GM13977 (cell line): ENCODE measurements at regions of chr4 and their contacts with region 1.

Region 1: DNA sequence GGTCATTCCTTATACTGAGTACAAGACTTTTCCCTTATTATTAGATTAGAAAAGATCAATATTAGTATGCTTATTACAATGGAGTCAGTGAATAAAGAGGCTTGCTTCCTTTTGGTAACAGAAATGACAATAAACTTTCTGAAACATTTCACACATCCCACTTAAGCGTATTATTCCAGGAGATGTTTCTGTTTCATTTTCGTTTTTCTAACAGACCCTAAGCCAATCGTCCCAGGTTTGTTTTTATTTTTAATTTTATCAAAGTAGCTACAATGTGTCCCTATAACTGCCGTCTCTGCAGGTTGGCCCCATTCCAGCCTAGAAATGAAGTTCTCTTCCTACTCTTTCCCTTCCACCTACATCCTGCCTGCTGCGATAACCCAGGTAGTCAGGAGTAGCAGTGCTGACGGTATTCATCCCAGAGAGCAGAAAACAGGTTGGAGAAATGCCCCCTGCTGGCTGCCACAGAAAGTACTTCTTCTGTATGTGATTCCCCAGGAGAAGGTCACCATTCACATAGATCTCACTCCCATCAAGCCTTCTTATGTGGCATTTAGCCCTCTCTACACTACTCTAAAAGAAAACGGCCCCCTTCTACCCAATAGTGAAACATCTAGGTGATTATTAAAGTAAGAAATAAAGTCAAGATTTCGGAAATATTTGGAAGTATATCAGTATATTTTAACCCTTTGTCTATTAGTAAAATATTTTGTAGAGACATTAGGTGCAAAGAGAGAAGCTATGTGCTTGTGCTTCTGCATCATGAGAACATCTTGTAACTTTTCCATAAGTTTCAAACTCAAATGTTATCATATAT is 40.4 kb downstream of the ENPEP start:
- DNase-seq: peak; percentile 19
- CTCF ChIP-seq: peak; percentile 70

Region 2: GRCh38 chr4:110005461-110006056 is 510.8 kb before region 1 on chr4:
- in situ Hi-C with region 1: loop called (anchors 5 kb)
- DNase-seq: peak; percentile 65
- CTCF ChIP-seq: peak; percentile 67

Region 3: GRCh38 chr4:110211007-110211769 is 305.1 kb before region 1 on chr4:
- in situ Hi-C with region 1: loop called (anchors 25 kb)
- DNase-seq: peak; percentile 56
- CTCF ChIP-seq: peak; percentile 74

Region 4: GRCh38 chr4:111296466-111296865 is 780.2 kb after region 1 on chr4:
- in situ Hi-C with region 1: no loop called
- DNase-seq: no peak
- CTCF ChIP-seq: no peak